CD4-positive, alpha-beta T cell (primary cell): ENCODE measurements at regions of chr12 and their contacts with region 1.

Region 1: GRCh38 chr12:110468212-110469048 is at the starts of genes FAM216A and GPN3:
- DNase-seq: peak; percentile 88 to 97 (median 92)
- ATAC-seq: peak; percentile 89
- H3K4me3 ChIP-seq: peak within 1 kb of the TSS; percentile 72
- H3K4me3 Mint-ChIP-seq: peak within 1 kb of the TSS; percentile 97
- H3K27ac ChIP-seq: peak within 1 kb of the TSS; percentile 66 to 92
- H3K27ac Mint-ChIP-seq: peak within 1 kb of the TSS; percentile 88
- H3K4me1 ChIP-seq: peaks cover 29% of the 10 kb centered on the region
- H3K4me1 Mint-ChIP-seq: peaks cover 33% of the 10 kb centered on the region
- H3K27me3 ChIP-seq: no peaks in the 10 kb centered on the region
- H3K27me3 Mint-ChIP-seq: no peaks in the 10 kb centered on the region
- CTCF ChIP-seq: no peak
- total RNA-seq, gene FAM216A: 5.5 to 7.4 TPM
- total RNA-seq, gene GPN3: 2.7 to 2.8 TPM

Region 2: DNA sequence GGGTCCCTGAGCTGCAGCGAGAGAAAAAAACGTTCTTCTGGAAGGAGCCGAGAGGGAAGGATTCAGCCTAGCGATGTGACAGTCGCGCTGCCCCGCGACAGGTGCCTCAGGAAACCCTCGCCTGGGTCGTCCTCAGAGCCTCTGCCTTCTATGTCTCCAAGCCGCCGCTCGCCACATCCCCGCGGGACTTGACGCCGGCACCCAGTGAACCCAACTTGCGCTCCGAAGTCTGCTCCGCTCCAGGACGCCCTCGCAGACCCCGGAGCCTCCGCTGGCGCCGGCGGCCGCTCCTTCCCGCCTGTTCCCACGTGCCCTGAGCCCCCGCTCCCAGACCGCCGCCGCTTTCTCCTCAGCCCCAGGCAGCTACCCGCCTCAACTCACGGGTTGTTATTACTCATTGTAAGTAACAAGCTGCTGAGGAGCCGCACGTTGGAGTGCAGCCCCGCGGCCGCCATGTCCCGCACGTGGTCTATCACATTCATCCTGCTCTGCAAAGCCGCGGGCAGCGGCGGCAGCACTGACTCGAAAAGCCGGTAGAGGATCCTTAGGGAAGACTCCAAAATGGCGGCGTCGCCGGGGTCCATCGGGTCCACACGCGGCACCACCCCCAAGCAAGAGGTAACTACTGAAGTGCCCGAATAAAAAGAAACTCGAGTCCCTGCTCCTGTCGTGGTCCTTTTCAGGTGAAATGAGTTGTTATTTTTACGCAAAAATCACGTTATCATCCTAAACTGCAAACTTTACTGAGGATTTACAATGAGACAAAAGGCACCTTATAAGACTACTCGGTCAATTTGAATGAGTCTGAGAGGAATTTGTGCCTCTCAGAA is 65.1 kb before region 1 on chr12 and contains the start of gene ANAPC7:
- CTCF ChIA-PET with region 1: interaction called, 4 read pairs
- POLR2A ChIA-PET with region 1: interaction called, 12 read pairs
- intact Hi-C with region 1: no loop called
- DNase-seq: peak; percentile 73 to 94 (median 84)
- ATAC-seq: peak; percentile 94
- H3K4me3 ChIP-seq: peak within 1 kb of the TSS; percentile 79
- H3K4me3 Mint-ChIP-seq: peak within 1 kb of the TSS; percentile 99
- H3K27ac ChIP-seq: peak within 1 kb of the TSS; percentile 86 to 91
- H3K27ac Mint-ChIP-seq: peak within 1 kb of the TSS; percentile 98
- H3K4me1 ChIP-seq: peaks cover 26% of the 10 kb centered on the region
- H3K4me1 Mint-ChIP-seq: peaks cover 41% of the 10 kb centered on the region
- H3K27me3 ChIP-seq: no peaks in the 10 kb centered on the region
- H3K27me3 Mint-ChIP-seq: no peaks in the 10 kb centered on the region
- CTCF ChIP-seq: no peak
- total RNA-seq, gene ANAPC7: 16.4 to 18.2 TPM

Region 3: DNA sequence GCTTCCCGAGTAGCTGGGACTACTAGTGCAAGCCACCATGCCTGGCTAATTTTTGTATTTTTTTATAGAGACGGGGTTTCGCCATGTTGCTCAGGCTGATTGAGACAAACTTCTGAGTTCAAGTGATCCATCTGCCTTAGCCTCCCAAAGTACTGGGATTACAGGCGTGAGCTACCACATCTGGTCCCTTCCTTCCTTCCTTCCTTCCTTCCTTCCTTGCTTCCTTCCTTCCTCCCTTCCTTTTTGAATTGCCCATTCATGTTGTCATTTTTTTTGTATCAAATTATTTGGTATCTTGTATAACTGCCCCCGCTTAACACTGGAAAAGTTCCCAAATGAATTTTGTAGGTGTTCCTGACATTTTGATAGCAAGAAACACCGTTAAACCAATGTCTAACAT is 45.4 kb after region 1 on chr12:
- CTCF ChIA-PET with region 1: interaction called, 3 read pairs
- POLR2A ChIA-PET with region 1: interaction called, 11 read pairs
- intact Hi-C with region 1: no loop called
- DNase-seq: no peak
- ATAC-seq: no peak
- H3K4me3 ChIP-seq: no peak overlapping the region
- H3K4me3 Mint-ChIP-seq: no peak overlapping the region
- H3K27ac ChIP-seq: no peak overlapping the region
- H3K27ac Mint-ChIP-seq: no peak overlapping the region
- H3K4me1 ChIP-seq: no peaks in the 10 kb centered on the region
- H3K4me1 Mint-ChIP-seq: no peaks in the 10 kb centered on the region
- H3K27me3 ChIP-seq: no peaks in the 10 kb centered on the region
- H3K27me3 Mint-ChIP-seq: no peaks in the 10 kb centered on the region
- CTCF ChIP-seq: no peak

Region 4: GRCh38 chr12:110583137-110584059 is 115.0 kb after region 1 on chr12 and contains the start of gene PPTC7:
- CTCF ChIA-PET with region 1: interaction called, 6 read pairs
- POLR2A ChIA-PET with region 1: interaction called, 18 read pairs
- intact Hi-C with region 1: no loop called
- DNase-seq: peak; percentile 96 to 98 (median 97)
- ATAC-seq: peak; percentile 92
- H3K4me3 ChIP-seq: peak within 1 kb of the TSS; percentile 95
- H3K4me3 Mint-ChIP-seq: peak within 1 kb of the TSS; percentile 97
- H3K27ac ChIP-seq: peak within 1 kb of the TSS; percentile 64 to 91
- H3K27ac Mint-ChIP-seq: peak within 1 kb of the TSS; percentile 96
- H3K4me1 ChIP-seq: peaks cover 67% of the 10 kb centered on the region
- H3K4me1 Mint-ChIP-seq: peaks cover 68% of the 10 kb centered on the region
- H3K27me3 ChIP-seq: no peaks in the 10 kb centered on the region
- H3K27me3 Mint-ChIP-seq: no peaks in the 10 kb centered on the region
- CTCF ChIP-seq: no peak
- total RNA-seq, gene PPTC7: 53.8 to 54.8 TPM

Region 5: GRCh38 chr12:110613771-110614684 is 145.6 kb after region 1 on chr12 and contains the start of gene TCTN1:
- CTCF ChIA-PET with region 1: interaction called, 14 read pairs
- POLR2A ChIA-PET with region 1: interaction called, 20 read pairs
- intact Hi-C with region 1: no loop called
- DNase-seq: peak; percentile 91 to 98 (median 96)
- ATAC-seq: peak; percentile 99
- H3K4me3 ChIP-seq: peak within 1 kb of the TSS; percentile 73
- H3K4me3 Mint-ChIP-seq: peak within 1 kb of the TSS; percentile 89
- H3K27ac ChIP-seq: peak within 1 kb of the TSS; percentile 61 to 68
- H3K27ac Mint-ChIP-seq: peak within 1 kb of the TSS; percentile 83
- H3K4me1 ChIP-seq: peaks cover 17% of the 10 kb centered on the region
- H3K4me1 Mint-ChIP-seq: peaks cover 4% of the 10 kb centered on the region
- H3K27me3 ChIP-seq: no peaks in the 10 kb centered on the region
- H3K27me3 Mint-ChIP-seq: no peaks in the 10 kb centered on the region
- CTCF ChIP-seq: no peak
- total RNA-seq, gene TCTN1: 5.0 to 5.5 TPM

Region 6: DNA sequence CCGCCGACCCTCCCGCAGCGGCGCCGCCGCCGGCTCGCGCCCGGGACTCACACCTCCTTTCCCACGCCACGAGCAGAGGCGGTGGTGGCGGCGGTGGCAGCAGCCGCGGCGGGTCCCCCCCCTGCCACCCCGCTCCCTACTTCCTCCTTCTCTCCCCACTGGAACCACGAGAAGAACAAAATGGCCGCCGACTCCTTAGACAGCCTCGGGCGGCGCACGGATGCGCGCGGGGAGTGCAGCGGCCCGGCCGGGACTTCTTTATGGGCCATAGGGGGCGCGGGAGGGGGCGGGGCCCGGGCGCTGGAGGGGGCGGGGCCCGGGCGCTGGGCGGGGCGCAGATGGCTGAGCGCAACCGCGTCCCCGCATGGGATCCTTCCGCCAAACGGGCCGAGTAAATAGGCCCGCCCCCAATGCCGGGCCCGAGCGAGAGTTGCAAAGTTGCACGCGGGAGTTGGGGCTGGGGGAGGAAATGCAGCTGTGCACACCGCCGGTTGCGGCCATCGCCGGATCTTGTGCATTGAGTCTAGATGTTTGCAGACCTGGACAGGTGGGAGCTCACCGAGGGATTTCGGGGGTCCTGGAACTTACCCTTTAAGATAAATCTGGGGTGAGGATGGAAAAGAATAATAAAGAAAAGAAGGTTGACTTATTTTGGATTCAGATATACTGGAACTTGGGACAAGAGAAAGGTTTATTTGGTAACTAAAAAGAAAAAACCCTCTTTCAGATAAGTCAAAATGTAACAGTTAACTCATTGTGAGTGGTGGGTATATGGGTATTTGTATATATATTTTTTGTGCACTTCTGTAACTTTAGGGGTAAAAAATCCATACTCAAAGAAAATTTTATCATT is 274.5 kb after region 1 on chr12 and contains the start of gene PPP1CC:
- CTCF ChIA-PET with region 1: interaction called, 5 read pairs
- POLR2A ChIA-PET with region 1: interaction called, 11 read pairs
- intact Hi-C with region 1: no loop called
- DNase-seq: peak; percentile 81 to 97 (median 90)
- ATAC-seq: peak; percentile 90
- H3K4me3 ChIP-seq: peak within 1 kb of the TSS; percentile 95
- H3K4me3 Mint-ChIP-seq: peak within 1 kb of the TSS; percentile 100
- H3K27ac ChIP-seq: peak within 1 kb of the TSS; percentile 50 to 71
- H3K27ac Mint-ChIP-seq: peak within 1 kb of the TSS; percentile 98
- H3K4me1 ChIP-seq: peaks cover 22% of the 10 kb centered on the region
- H3K4me1 Mint-ChIP-seq: peaks cover 57% of the 10 kb centered on the region
- H3K27me3 ChIP-seq: no peaks in the 10 kb centered on the region
- H3K27me3 Mint-ChIP-seq: no peaks in the 10 kb centered on the region
- CTCF ChIP-seq: no peak
- total RNA-seq, gene PPP1CC: 146 to 150 TPM